PC-3 (cell line): ENCODE measurements at regions of chr3 and their contacts with region 1.

Region 1: GRCh38 chr3:14651440-14652251 is at the start of gene CCDC174:
- DNase-seq: peak; percentile 99
- ATAC-seq: peak; percentile 96
- H3K4me3 ChIP-seq: peak within 1 kb of the TSS; percentile 90
- H3K27ac ChIP-seq: peak within 1 kb of the TSS; percentile 59
- H3K4me1 ChIP-seq: peaks cover 21% of the 10 kb centered on the region
- H3K27me3 ChIP-seq: no peaks in the 10 kb centered on the region
- CTCF ChIP-seq: no peak
- total RNA-seq, gene CCDC174: 8.2 and 16.1 TPM in 2 replicates

Region 2: DNA sequence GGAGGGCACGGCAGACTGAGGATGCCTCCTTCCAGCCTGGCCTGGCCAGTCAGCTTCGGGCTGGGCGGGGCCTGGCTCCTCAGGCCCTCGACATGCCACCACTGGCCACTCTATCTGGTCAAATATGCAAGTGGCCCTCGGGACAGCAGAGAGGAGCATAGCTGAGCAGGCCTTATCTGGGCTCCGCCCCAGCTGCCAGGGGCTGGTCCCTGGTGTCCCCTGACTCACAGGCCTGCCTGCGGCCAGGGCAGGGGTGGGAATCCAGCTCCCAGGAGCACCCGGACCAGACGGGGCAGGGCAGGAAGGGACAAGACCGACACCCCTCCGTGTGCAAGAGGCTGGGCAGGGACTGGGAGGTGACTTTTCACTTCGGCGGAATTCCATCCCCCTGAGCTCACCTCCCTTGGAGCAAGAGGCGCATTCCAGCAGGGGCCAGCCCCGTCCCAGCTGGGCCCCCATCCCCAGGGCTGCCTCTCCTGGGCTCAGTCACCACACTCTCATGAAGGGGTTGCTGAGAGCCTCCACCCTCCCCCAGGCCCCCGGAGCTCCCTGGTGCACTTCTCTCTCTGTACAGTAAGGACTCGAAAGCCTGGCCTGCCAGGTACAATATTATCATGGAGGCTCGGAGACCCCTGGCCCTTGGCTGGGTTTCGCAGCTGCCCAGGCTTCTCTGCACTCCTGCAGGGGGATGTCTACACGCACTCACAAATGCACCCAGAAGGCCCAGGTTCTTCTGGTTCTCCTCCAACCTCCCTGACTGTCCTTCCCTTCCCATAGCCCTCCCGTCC is 801.3 kb before region 1 on chr3:
- CTCF ChIA-PET with region 1: no interaction called
- POLR2A ChIA-PET with region 1: no interaction called
- intact Hi-C with region 1: no loop called
- DNase-seq: peak; percentile 98
- ATAC-seq: peak; percentile 79
- H3K4me3 ChIP-seq: no peak overlapping the region
- H3K27ac ChIP-seq: peak overlapping the region; percentile 84
- H3K4me1 ChIP-seq: peaks cover 61% of the 10 kb centered on the region
- H3K27me3 ChIP-seq: no peaks in the 10 kb centered on the region
- CTCF ChIP-seq: no peak

Region 3: GRCh38 chr3:14178247-14179113 is 473.2 kb before region 1 on chr3 and contains the starts of genes LSM3 and XPC:
- CTCF ChIA-PET with region 1: no interaction called
- POLR2A ChIA-PET with region 1: no interaction called
- intact Hi-C with region 1: loop called (anchors 5 kb)
- DNase-seq: peak; percentile 99
- ATAC-seq: peak; percentile 95
- H3K4me3 ChIP-seq: peak within 1 kb of the TSS; percentile 74
- H3K27ac ChIP-seq: peak within 1 kb of the TSS; percentile 39
- H3K4me1 ChIP-seq: peaks cover 31% of the 10 kb centered on the region
- H3K27me3 ChIP-seq: no peaks in the 10 kb centered on the region
- CTCF ChIP-seq: no peak
- total RNA-seq, gene LSM3: 22.0 and 27.2 TPM in 2 replicates
- total RNA-seq, gene XPC: 24.3 and 26.1 TPM in 2 replicates

Region 4: GRCh38 chr3:14426063-14426620 is 225.5 kb before region 1 on chr3:
- CTCF ChIA-PET with region 1: interaction called, 10 read pairs
- POLR2A ChIA-PET with region 1: no interaction called
- intact Hi-C with region 1: no loop called
- DNase-seq: no peak
- ATAC-seq: no peak
- H3K4me3 ChIP-seq: no peak overlapping the region
- H3K27ac ChIP-seq: peak overlapping the region; percentile 32
- H3K4me1 ChIP-seq: peaks cover 50% of the 10 kb centered on the region
- H3K27me3 ChIP-seq: no peaks in the 10 kb centered on the region
- CTCF ChIP-seq: no peak

Region 5: GRCh38 chr3:14508961-14509795 is 142.5 kb before region 1 on chr3:
- CTCF ChIA-PET with region 1: interaction called, 3 read pairs
- POLR2A ChIA-PET with region 1: no interaction called
- intact Hi-C with region 1: loop called (anchors 10 kb)
- DNase-seq: peak; percentile 80
- ATAC-seq: peak; percentile 89
- H3K4me3 ChIP-seq: peak overlapping the region; percentile 51; the same call in 1 of the 2 replicates
- H3K27ac ChIP-seq: no peak overlapping the region
- H3K4me1 ChIP-seq: no peaks in the 10 kb centered on the region
- H3K27me3 ChIP-seq: no peaks in the 10 kb centered on the region; the same call in 1 of the 2 replicates
- CTCF ChIP-seq: peak; percentile 80

Region 6: GRCh38 chr3:14587740-14588360 is 63.8 kb before region 1 on chr3:
- CTCF ChIA-PET with region 1: interaction called, 4 read pairs
- POLR2A ChIA-PET with region 1: interaction called, 6 read pairs
- intact Hi-C with region 1: loop called (anchors 5 kb)
- DNase-seq: peak; percentile 88
- ATAC-seq: peak; percentile 77
- H3K4me3 ChIP-seq: no peak overlapping the region
- H3K27ac ChIP-seq: peak overlapping the region; percentile 32
- H3K4me1 ChIP-seq: peaks cover 35% of the 10 kb centered on the region
- H3K27me3 ChIP-seq: no peaks in the 10 kb centered on the region
- CTCF ChIP-seq: no peak

Region 7: DNA sequence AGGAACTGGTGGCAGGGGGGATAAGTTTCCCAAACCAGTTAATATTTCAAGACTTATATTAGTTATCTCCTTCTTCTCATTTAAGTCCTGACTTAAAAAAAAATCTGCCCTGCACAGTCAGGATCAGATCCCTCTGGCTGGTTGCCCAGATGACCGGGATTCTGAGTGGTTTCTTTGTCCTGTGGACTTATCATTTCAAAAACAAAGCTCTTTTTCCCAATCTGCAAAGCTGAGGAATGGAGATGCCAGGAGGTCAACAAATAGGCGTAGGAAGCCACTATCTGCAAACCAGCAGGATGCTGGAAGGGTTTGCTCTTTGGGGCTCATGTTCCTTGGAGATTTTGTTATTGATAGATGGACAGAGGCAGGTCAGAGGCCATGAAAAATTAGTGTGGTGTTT is 29.1 kb after region 1 on chr3:
- CTCF ChIA-PET with region 1: interaction called, 11 read pairs
- POLR2A ChIA-PET with region 1: no interaction called
- intact Hi-C with region 1: no loop called
- DNase-seq: peak; percentile 30
- ATAC-seq: no peak
- H3K4me3 ChIP-seq: no peak overlapping the region
- H3K27ac ChIP-seq: no peak overlapping the region
- H3K4me1 ChIP-seq: no peaks in the 10 kb centered on the region
- H3K27me3 ChIP-seq: no peaks in the 10 kb centered on the region
- CTCF ChIP-seq: no peak

Region 8: DNA sequence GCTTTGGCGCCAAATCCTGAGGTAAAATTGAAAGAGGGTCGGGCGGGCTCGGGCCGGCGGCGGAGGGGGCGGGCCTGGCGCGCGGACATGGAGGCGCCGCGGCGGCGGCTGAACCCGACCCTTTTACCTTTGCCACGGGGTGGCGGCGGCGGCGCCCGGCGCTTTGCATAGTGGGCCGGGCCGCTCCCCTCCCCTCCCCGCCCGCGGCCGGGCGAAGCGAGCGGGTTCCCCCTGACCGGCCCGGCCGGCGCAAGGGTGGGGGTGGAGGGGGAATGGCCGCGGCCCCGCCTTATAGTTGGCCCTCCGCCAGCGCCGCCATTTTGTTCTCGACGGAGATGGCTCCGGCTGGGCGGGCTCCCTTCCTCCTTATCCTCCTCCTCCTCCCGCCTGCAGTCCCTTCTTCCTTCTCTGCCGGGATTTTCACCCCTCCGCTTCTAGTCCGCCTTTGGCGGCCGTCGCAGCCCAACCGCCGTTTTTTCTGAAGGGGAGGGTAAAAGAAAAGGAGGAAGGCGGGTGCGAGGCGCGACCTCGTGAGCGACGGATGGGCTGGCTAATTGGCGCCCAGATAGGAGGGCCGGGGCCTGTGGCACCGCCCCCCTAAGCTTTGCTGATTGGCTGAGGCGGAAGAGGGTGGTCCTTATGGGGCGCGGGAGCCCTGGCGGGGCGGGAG is 296.4 kb after region 1 on chr3:
- CTCF ChIA-PET with region 1: no interaction called
- POLR2A ChIA-PET with region 1: no interaction called
- intact Hi-C with region 1: loop called (anchors 1 kb)
- DNase-seq: peak; percentile 97
- ATAC-seq: peak; percentile 92
- H3K4me3 ChIP-seq: peak overlapping the region; percentile 91
- H3K27ac ChIP-seq: peak overlapping the region; percentile 97
- H3K4me1 ChIP-seq: peaks cover 16% of the 10 kb centered on the region; the same call in 1 of the 2 replicates
- H3K27me3 ChIP-seq: no peaks in the 10 kb centered on the region
- CTCF ChIP-seq: no peak

Region 9: GRCh38 chr3:14959359-14959943 is 307.8 kb after region 1 on chr3:
- CTCF ChIA-PET with region 1: no interaction called
- POLR2A ChIA-PET with region 1: no interaction called
- intact Hi-C with region 1: no loop called
- DNase-seq: no peak
- ATAC-seq: no peak
- H3K4me3 ChIP-seq: no peak overlapping the region
- H3K27ac ChIP-seq: no peak overlapping the region
- H3K4me1 ChIP-seq: no peaks in the 10 kb centered on the region
- H3K27me3 ChIP-seq: no peaks in the 10 kb centered on the region
- CTCF ChIP-seq: no peak